PC-9 (cell line): ENCODE measurements at regions of chr15 and their contacts with region 1.

Region 1: DNA sequence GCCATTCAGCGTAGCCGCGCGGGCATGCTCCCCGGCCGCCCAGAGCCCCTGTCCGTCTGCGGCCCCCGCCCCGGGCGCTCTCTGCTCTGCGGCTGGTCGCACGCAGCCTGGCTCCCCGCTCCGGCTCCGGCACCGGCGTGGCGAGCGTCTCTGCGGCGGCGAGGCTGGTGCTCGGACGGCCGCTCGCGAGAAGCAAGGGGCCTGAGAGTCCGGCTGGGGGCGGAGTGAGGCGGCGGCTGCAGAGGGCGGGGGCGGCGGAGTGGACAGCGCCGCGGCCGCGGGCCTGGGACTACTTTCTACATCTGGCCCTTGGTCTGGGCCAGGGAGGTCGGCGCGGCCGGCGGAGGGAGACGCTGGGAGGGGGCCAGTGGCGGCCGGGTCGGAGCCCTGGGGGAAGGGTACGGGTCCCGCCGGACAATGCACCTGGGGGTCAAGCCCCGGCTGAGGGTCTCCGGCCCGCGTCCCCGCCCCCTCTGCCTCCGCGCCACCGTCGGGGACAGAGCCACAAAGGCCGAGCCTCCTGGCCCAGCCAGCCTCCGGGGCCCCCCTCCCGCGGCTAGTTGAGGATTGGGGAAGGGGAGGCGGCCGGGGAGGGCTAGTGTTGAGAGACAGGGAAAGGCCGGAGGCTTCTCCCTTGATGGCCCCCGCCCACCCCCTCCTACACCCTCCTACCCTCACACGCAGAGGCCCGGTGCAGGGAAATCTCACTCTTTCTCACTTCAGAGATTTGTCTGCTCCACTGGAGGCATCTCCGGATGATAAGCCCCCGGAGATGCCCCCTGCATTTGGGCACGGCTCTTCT is at the start of gene PRTG:
- DNase-seq: peak; percentile 43 to 81
- H3K4me3 ChIP-seq: peak within 1 kb of the TSS; percentile 90
- H3K27ac ChIP-seq: no peak within 1 kb of the TSS
- H3K4me1 ChIP-seq: peaks cover 25% of the 10 kb centered on the region
- H3K27me3 ChIP-seq: no peaks in the 10 kb centered on the region
- CTCF ChIP-seq: no peak
- total RNA-seq, gene PRTG: 11.4 and 16.5 TPM in 2 replicates

Region 2: DNA sequence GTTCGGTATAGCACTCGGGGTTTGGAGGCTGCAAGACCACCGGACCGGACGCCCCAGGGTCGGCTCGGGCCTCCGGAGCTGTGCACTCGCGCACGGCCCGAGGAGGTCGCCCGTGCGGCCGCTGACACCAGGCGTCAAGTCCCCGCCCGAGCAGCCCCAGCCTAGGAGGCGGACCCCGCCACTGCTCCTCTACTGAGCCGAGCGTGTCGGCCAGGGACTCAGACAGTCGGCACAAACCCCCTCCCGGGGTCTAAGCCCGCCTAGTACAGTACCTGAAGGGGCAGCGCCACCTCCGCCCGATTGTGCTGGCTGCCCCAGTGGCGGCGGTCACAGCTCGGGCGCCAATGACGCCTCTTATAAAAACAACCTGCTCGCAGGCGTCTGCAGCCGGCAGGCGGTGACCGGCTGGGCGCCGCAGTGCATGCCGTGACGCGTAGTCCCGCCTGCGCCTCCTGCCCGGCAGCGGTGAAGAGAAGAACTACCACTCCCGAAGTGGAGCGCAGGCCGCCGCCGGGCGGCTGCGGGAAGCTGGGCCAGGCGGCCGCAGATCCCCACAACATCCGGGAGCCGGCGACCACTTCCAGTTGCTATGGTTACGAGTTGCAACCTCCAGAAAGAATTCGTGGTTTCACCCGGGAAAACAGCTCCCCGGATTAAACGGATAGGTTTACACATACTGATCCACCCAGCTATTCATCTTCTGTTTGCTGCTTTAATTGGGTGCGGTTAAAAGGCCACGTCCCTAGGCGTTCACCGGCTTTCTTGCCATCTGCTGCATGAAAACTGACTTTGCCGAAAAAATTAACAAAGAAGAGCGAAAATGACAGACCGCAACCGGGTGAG is 335.0 kb before region 1 on chr15 and contains the starts of genes CCPG1 and PIERCE2:
- CTCF ChIA-PET with region 1: no interaction called
- POLR2A ChIA-PET with region 1: no interaction called
- intact Hi-C with region 1: no loop called
- DNase-seq: peak; percentile 79 to 94
- H3K4me3 ChIP-seq: peak within 1 kb of the TSS; percentile 75
- H3K27ac ChIP-seq: peak within 1 kb of the TSS; percentile 55
- H3K4me1 ChIP-seq: peaks cover 34% of the 10 kb centered on the region
- H3K27me3 ChIP-seq: no peaks in the 10 kb centered on the region
- CTCF ChIP-seq: peak; percentile 72
- total RNA-seq, gene CCPG1: 26.3 and 26.4 TPM in 2 replicates
- total RNA-seq, gene PIERCE2: 1.2 and 2.1 TPM in 2 replicates

Region 3: DNA sequence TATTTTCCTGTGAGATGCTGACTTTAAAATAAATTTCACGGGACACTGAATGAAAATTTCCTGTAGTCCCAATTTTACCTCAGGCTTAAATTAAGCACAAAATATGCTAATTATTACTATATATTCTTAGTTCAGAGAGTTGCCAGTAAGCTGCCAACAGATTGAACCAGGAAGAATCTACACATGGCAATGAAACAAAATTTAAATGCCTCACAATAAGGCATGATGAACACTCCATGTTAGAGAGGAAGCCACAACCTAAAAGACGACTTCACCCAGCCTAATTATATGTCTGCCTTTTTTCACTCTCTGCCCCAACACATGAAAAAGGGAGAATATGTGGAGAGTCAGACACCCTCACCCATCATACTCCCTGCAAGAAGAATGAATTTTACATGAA is 274.8 kb before region 1 on chr15:
- CTCF ChIA-PET with region 1: no interaction called
- POLR2A ChIA-PET with region 1: no interaction called
- intact Hi-C with region 1: no loop called
- DNase-seq: no peak
- H3K4me3 ChIP-seq: no peak overlapping the region
- H3K27ac ChIP-seq: no peak overlapping the region
- H3K4me1 ChIP-seq: no peaks in the 10 kb centered on the region
- H3K27me3 ChIP-seq: no peaks in the 10 kb centered on the region
- CTCF ChIP-seq: no peak

Region 4: GRCh38 chr15:55799291-55800212 is 56.4 kb after region 1 on chr15:
- CTCF ChIA-PET with region 1: no interaction called
- POLR2A ChIA-PET with region 1: no interaction called
- intact Hi-C with region 1: loop called (anchors 5 kb)
- DNase-seq: peak in 1 of 2 experiments; percentile 57
- H3K4me3 ChIP-seq: no peak overlapping the region
- H3K27ac ChIP-seq: no peak overlapping the region
- H3K4me1 ChIP-seq: peaks cover 16% of the 10 kb centered on the region
- H3K27me3 ChIP-seq: no peaks in the 10 kb centered on the region
- CTCF ChIP-seq: peak; percentile 69

Region 5: GRCh38 chr15:55823191-55823670 is 80.1 kb after region 1 on chr15:
- CTCF ChIA-PET with region 1: no interaction called
- POLR2A ChIA-PET with region 1: no interaction called
- intact Hi-C with region 1: no loop called
- DNase-seq: no peak
- H3K4me3 ChIP-seq: no peak overlapping the region
- H3K27ac ChIP-seq: no peak overlapping the region
- H3K4me1 ChIP-seq: no peaks in the 10 kb centered on the region
- H3K27me3 ChIP-seq: no peaks in the 10 kb centered on the region
- CTCF ChIP-seq: no peak